ENCODE measurements at regions of chr9 and their contacts with region 1.

Region 1: GRCh38 chr9:35518226-35518821 is 28.4 kb downstream of the RUSC2 start:
- DNase-seq: peak; percentile 80
- H3K4me3 ChIP-seq: no peak overlapping the region
- H3K27ac ChIP-seq: peak overlapping the region; percentile 99
- H3K4me1 ChIP-seq: peaks cover 60% of the 10 kb centered on the region
- H3K27me3 ChIP-seq: no peaks in the 10 kb centered on the region
- CTCF ChIP-seq: no peak
- POLR2A ChIP-seq: peak; percentile 59

Region 2: DNA sequence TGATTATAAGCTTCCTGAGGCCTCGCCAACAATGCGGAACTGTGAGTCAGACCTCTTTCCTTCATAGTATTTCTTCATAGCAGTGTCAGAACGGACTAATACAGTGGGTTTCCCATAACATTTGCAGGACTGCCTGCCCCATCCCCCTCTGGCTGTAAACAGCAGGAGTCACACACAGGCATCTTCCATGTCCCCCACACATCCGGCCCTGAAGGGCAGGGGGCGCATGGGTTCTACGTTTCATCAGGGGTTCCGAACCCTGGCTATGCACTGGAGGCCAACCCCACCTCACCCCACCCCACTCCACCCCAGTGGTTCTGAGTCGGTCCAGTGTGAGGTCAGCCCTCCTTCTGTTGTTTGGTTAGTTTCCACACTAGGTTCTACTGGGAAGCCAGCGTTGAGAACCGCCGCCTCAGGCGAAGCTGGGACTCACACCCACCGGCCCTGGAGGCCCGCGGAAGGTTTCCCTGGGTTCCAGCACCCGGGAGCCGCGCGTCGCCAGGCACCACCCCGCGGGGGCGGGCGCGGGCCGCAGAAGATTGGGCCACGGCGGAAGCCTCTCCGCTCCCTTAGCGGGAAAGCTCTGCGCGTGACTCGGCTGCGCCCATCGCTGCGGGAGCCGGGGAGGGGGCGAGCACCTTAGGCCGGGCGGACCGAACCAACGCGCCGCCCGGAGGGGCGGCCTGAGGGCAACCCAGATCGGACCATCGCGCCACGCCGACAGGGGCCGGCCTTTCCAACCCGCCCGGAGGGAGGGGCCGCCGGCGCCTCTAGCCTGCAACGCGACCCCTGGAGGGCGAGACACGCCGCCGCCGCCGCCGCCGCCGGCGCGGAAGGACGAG is 28.8 kb before region 1 on chr9 and contains the start of gene RUSC2:
- CTCF ChIA-PET with region 1: interaction called, 18 read pairs
- POLR2A ChIA-PET with region 1: no interaction called
- dilution Hi-C with region 1: no loop called
- intact Hi-C with region 1: loop called (anchors 1 kb)
- DNase-seq: peak; percentile 88
- H3K4me3 ChIP-seq: peak within 1 kb of the TSS; percentile 62 to 91 (median 66)
- H3K27ac ChIP-seq: peak within 1 kb of the TSS; percentile 96
- H3K4me1 ChIP-seq: peaks cover 10% of the 10 kb centered on the region
- H3K27me3 ChIP-seq: no peaks in the 10 kb centered on the region
- CTCF ChIP-seq: peak; percentile 30 to 38
- POLR2A ChIP-seq: peak; percentile 84
- total RNA-seq, gene RUSC2: 46.2 and 52.1 TPM in 2 replicates

Region 3: GRCh38 chr9:35529161-35529823 is 11.0 kb after region 1 on chr9:
- CTCF ChIA-PET with region 1: interaction called, 15 read pairs
- POLR2A ChIA-PET with region 1: interaction called, 4 read pairs
- dilution Hi-C with region 1: no loop called
- intact Hi-C with region 1: no loop called
- DNase-seq: no peak
- H3K4me3 ChIP-seq: no peak overlapping the region
- H3K27ac ChIP-seq: no peak overlapping the region
- H3K4me1 ChIP-seq: peaks cover 15% of the 10 kb centered on the region
- H3K27me3 ChIP-seq: no peaks in the 10 kb centered on the region
- CTCF ChIP-seq: no peak
- POLR2A ChIP-seq: no peak

Region 4: DNA sequence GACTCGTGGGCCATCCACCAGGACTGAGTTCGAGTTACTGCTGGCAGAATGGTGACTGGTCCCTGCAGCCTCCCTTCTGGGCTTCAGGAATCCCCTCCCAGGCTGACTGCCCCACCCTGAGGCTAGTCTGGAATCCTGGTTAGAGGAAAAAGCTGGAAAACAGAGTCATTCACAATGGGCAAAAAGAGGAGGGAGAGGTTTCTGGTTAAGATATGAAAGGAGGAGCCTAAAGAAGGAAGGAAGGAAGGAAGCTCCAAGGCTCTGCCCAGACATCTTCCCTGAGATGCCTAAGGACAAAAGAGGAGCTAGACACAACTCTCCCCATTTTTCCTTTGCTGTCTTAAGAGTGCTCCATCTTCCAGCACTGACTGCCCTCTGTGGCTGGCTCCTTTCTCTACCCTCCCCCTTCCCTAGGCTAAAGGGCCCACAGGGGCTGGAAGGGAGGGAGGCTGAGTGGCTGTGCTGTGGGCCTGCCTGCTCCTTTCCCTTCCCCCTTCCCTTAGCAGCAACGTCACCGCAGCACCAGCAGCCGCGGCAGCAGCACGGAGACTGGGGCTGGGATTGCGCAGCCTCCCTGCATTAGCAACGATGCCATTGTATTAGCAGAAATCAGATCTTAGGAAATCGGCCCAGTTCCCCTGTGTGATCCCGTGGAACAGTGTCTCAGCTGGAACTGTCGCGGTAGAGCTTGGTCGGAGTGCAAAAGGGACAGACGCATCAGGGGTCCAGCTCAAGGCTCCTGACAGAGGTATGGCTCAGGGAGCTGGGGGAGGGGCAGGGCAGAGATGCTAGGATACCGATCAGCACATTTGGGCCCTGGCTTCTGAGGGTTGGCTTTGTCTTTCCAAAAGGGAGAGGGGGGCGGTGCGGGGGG is 20.3 kb after region 1 on chr9:
- CTCF ChIA-PET with region 1: interaction called, 29 read pairs
- POLR2A ChIA-PET with region 1: interaction called, 12 read pairs
- dilution Hi-C with region 1: no loop called
- intact Hi-C with region 1: loop called (anchors 1 kb)
- DNase-seq: peak; percentile 83
- H3K4me3 ChIP-seq: peak overlapping the region in 2 of 3 experiments; percentile 28 to 52
- H3K27ac ChIP-seq: peak overlapping the region; percentile 77
- H3K4me1 ChIP-seq: peaks cover 30% of the 10 kb centered on the region
- H3K27me3 ChIP-seq: no peaks in the 10 kb centered on the region
- CTCF ChIP-seq: no peak
- POLR2A ChIP-seq: peak; percentile 42

Region 5: GRCh38 chr9:35593581-35593980 is 75.3 kb after region 1 on chr9:
- CTCF ChIA-PET with region 1: no interaction called
- POLR2A ChIA-PET with region 1: no interaction called
- dilution Hi-C with region 1: no loop called
- intact Hi-C with region 1: no loop called
- DNase-seq: no peak
- H3K4me3 ChIP-seq: no peak overlapping the region
- H3K27ac ChIP-seq: no peak overlapping the region
- H3K4me1 ChIP-seq: no peaks in the 10 kb centered on the region
- H3K27me3 ChIP-seq: peaks cover 2 to 12% of the 10 kb centered on the region in 2 experiments
- CTCF ChIP-seq: no peak
- POLR2A ChIP-seq: no peak

Region 6: GRCh38 chr9:37302277-37302676 is 1784.0 kb after region 1 on chr9:
- CTCF ChIA-PET with region 1: no interaction called
- POLR2A ChIA-PET with region 1: no interaction called
- dilution Hi-C with region 1: no loop called
- intact Hi-C with region 1: no loop called
- DNase-seq: no peak
- H3K4me3 ChIP-seq: no peak overlapping the region
- H3K27ac ChIP-seq: no peak overlapping the region
- H3K4me1 ChIP-seq: no peaks in the 10 kb centered on the region
- H3K27me3 ChIP-seq: no peaks in the 10 kb centered on the region
- CTCF ChIP-seq: no peak
- POLR2A ChIP-seq: no peak

Measured in endothelial cell of umbilical vein (primary cell).